Vagina (tissue), 2 donors: ENCODE measurements at regions of chr20 and their contacts with region 1.

Region 1: GRCh38 chr20:58890518-58891085 is 38.1 kb downstream of the GNAS start:
- DNase-seq: peak in 1 of 2 donors; percentile 89
- H3K4me3 ChIP-seq: peak overlapping the region; percentile 74 to 89
- H3K27ac ChIP-seq: peak overlapping the region; percentile 99
- H3K4me1 ChIP-seq: peaks cover 37% of the 10 kb centered on the region
- H3K27me3 ChIP-seq: no peaks in the 10 kb centered on the region
- CTCF ChIP-seq: no peak
- POLR2A ChIP-seq: peak in 1 of 2 donors; percentile 23

Region 2: DNA sequence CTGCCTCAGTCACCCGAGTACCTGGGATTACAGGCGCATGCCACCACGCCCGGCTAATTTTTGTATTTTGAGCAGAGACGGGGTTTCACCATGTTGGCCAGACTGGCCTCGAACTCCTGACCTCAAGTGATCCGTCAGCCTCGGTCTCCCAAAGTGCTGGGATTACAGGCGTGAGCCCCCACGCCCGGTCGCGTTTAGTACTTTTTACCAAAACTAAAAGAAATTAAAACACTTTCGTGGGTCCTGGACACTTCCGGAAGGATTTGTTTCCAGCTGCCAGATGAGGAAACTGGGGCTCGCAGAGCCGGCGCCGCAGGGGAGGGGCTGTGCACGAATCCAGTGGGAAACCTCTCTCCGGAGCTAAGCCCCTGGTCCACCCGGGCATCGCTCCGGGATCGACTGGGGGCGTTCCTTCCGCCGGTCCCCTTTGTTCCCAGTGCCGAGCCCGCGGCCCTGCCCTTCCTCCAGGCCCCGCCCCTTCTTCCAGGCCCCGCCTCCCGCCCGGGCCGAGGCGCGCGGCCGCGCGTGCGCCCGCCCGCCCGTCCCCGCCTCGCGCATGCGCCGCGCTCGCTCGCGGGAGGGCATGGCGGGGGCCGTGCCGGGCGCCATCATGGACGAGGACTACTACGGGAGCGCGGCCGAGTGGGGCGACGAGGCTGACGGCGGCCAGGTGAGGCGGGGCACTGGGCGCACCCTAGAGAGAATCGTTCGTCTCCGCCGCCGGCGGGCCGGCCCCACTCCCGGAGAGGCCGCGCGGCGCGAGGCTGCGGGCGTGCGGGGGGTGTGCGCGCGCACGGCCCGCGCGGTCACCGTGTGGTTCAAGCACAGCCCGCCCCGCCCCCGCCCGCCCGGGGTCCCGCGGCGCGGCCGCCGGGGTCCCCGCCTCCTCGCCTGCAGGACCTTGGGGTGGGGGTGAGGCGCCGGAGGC is 90.4 kb after region 1 on chr20 and contains the start of gene NELFCD:
- intact Hi-C with region 1: loop called (anchors 5 kb)
- DNase-seq: peak in 1 of 2 donors; percentile 87
- H3K4me3 ChIP-seq: peak within 1 kb of the TSS; percentile 71 to 95
- H3K27ac ChIP-seq: peak within 1 kb of the TSS; percentile 83
- H3K4me1 ChIP-seq: peaks cover 39% of the 10 kb centered on the region
- H3K27me3 ChIP-seq: no peaks in the 10 kb centered on the region
- CTCF ChIP-seq: no peak
- POLR2A ChIP-seq: peak in 1 of 2 donors; percentile 64
- total RNA-seq, gene NELFCD: 85.7 TPM

Region 3: GRCh38 chr20:59032023-59032712 is 141.6 kb after region 1 on chr20 and contains the start of gene ATP5F1E:
- intact Hi-C with region 1: loop called (anchors 5 kb)
- DNase-seq: peak in 1 of 2 donors; percentile 96
- H3K4me3 ChIP-seq: peak within 1 kb of the TSS; percentile 78 to 92
- H3K27ac ChIP-seq: peak within 1 kb of the TSS; percentile 83
- H3K4me1 ChIP-seq: peaks cover 48% of the 10 kb centered on the region
- H3K27me3 ChIP-seq: no peaks in the 10 kb centered on the region
- CTCF ChIP-seq: no peak
- POLR2A ChIP-seq: peak in 1 of 2 donors; percentile 74
- total RNA-seq, gene ATP5F1E: 22.8 TPM

Region 4: GRCh38 chr20:59299944-59300331 is 409.3 kb after region 1 on chr20:
- intact Hi-C with region 1: no loop called
- DNase-seq: no peak
- H3K4me3 ChIP-seq: peak overlapping the region in 1 of 2 donors; percentile 43
- H3K27ac ChIP-seq: peak overlapping the region; percentile 70
- H3K4me1 ChIP-seq: peaks cover 5% of the 10 kb centered on the region
- H3K27me3 ChIP-seq: no peaks in the 10 kb centered on the region
- CTCF ChIP-seq: no peak
- POLR2A ChIP-seq: no peak